Activated T-helper 1 cell treated with anti-CD3 and anti-CD28 coated beads, Interleukin-12 subunit alpha, Interleukin-12 subunit beta, Interleukin-2, Interleukin-4 antibody, amounts not matched to agents 30 ng/mL and 10 ng/mL and 1 ng/mL, durations not matched to agents 14 hours and 24 hours and 36 hours (primary cell): ENCODE measurements at regions of chr1 and their contacts with region 1.

Region 1: GRCh38 chr1:199173356-199173755 is 534.5 kb downstream of the PTPRC start:
- DNase-seq: peak; percentile 35
- H3K4me3 Mint-ChIP-seq: peak overlapping the region; percentile 31
- H3K27ac Mint-ChIP-seq: peak overlapping the region; percentile 73
- H3K4me1 Mint-ChIP-seq: peaks cover 60% of the 10 kb centered on the region
- H3K27me3 Mint-ChIP-seq: peaks cover 2% of the 10 kb centered on the region

Region 2: GRCh38 chr1:197775282-197776262 is 1397.8 kb before region 1 on chr1 and contains the start of gene DENND1B:
- intact Hi-C with region 1: loop called (anchors 10 kb)
- DNase-seq: peak; percentile 80
- H3K4me3 Mint-ChIP-seq: peak within 1 kb of the TSS; percentile 85
- H3K27ac Mint-ChIP-seq: peak within 1 kb of the TSS; percentile 95
- H3K4me1 Mint-ChIP-seq: peaks cover 72% of the 10 kb centered on the region
- H3K27me3 Mint-ChIP-seq: no peaks in the 10 kb centered on the region
- total RNA-seq, gene DENND1B: 15.3 and 16.5 TPM in 2 replicates

Region 3: GRCh38 chr1:198638894-198639635 is 534.3 kb before region 1 on chr1 and contains the start of gene PTPRC:
- intact Hi-C with region 1: loop called (anchors 10 kb)
- DNase-seq: no peak
- H3K4me3 Mint-ChIP-seq: peak within 1 kb of the TSS; percentile 92
- H3K27ac Mint-ChIP-seq: peak within 1 kb of the TSS; percentile 96
- H3K4me1 Mint-ChIP-seq: peaks cover 54% of the 10 kb centered on the region
- H3K27me3 Mint-ChIP-seq: no peaks in the 10 kb centered on the region
- total RNA-seq, gene PTPRC: 512 and 516 TPM in 2 replicates

Region 4: GRCh38 chr1:198937231-198938031 is 235.9 kb before region 1 on chr1:
- intact Hi-C with region 1: loop called (anchors 1 kb)
- DNase-seq: peak; percentile 71
- H3K4me3 Mint-ChIP-seq: no peak overlapping the region
- H3K27ac Mint-ChIP-seq: peak overlapping the region; percentile 93
- H3K4me1 Mint-ChIP-seq: peaks cover 33% of the 10 kb centered on the region
- H3K27me3 Mint-ChIP-seq: no peaks in the 10 kb centered on the region

Region 5: DNA sequence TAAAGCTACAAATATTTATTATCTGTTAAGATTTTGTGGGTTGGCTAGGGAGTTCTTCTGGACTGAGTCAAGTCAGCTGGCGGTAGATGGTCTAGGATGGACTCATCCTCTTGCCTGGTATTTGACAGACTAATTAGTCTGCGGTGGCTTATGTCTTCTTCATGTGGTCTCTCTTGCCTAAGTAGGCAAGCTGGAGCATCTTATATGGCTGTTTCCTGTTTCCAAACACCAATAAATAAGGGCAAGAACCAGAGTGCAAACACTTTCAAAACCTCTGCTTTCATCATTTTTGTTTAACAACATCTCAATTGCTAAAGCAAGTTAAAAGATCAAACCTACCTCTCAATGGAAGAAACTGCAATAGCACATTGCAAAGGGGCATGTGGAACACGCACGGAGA is 49.7 kb before region 1 on chr1:
- intact Hi-C with region 1: loop called (anchors 5 kb)
- DNase-seq: no peak
- H3K4me3 Mint-ChIP-seq: no peak overlapping the region
- H3K27ac Mint-ChIP-seq: no peak overlapping the region
- H3K4me1 Mint-ChIP-seq: peaks cover 18% of the 10 kb centered on the region
- H3K27me3 Mint-ChIP-seq: peaks cover 7% of the 10 kb centered on the region

Region 6: DNA sequence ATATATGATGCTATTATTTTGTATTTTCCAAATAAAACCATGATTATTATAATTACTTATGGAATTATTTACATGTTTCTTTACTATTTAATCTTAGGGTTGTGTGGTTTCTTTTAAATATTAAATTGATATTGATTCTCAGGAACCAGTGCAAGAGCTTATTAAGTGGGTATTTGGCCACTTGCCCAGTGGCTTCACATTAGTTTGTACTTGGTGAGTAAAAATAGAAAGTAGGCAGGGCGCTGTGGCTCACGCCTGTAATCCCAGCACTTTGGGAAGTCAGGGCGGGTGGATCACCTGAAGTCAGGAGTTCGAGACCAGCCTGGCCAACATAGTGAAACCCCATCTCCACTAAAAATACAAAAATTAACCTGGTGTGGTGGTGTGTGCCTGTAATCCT is 37.5 kb before region 1 on chr1:
- intact Hi-C with region 1: no loop called
- DNase-seq: no peak
- H3K4me3 Mint-ChIP-seq: no peak overlapping the region
- H3K27ac Mint-ChIP-seq: no peak overlapping the region
- H3K4me1 Mint-ChIP-seq: peaks cover 13% of the 10 kb centered on the region
- H3K27me3 Mint-ChIP-seq: peaks cover 7% of the 10 kb centered on the region

Region 7: GRCh38 chr1:199243423-199244061 is 70.2 kb after region 1 on chr1:
- intact Hi-C with region 1: loop called (anchors 1 kb)
- DNase-seq: peak; percentile 70
- H3K4me3 Mint-ChIP-seq: no peak overlapping the region
- H3K27ac Mint-ChIP-seq: no peak overlapping the region
- H3K4me1 Mint-ChIP-seq: peaks cover 18% of the 10 kb centered on the region
- H3K27me3 Mint-ChIP-seq: peaks cover 19% of the 10 kb centered on the region